Cardiac septum (tissue), 1 donor: ENCODE measurements at regions of chr7 and their contacts with region 1.

Region 1: DNA sequence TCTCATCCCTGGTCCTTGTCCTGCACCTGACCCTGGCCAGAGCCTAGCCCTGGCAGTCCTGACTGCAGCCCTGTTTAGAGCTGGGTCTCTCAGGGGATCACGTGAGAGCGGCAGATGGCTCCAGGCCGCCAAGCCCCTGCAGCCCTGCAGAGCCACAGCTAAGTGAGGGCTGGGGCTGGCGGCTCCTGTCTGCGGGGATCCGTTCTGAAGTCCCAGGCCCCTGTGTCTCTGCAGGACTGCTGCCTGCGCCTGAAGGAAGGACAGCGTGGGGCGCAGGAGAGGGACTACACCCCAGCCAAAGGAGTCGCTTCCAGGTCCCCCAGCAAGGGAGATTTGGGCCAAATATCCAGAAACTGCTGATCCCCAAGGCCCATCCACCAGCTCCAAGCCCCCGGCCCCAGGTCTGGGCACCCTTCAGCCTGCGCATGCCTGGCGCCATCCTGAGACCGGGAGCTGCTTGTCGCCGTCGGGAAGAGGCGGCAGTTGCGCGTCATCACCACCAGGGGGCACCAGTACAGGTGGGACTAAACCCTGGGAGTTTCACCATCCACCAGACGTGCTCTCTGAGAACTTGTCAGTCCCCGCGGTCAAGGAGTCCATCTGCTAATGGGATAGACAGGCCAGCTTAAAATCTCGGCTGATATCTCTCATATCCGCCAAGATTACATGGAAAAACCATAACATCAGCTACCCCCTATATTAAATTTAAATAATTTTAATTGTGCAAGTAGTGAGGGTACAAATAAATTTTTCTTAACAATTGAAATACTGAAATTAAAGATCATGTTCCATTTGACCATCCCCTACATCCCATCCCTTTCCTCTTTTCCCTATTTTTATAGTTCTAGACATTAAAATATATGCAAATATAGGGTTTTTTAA is 25.1 kb upstream of the GHRHR start:
- DNase-seq: peak; percentile 93

Region 2: GRCh38 chr7:30893357-30893756 is 45.3 kb before region 1 on chr7:
- intact Hi-C with region 1: loop called (anchors 5 kb)
- DNase-seq: no peak

Region 3: DNA sequence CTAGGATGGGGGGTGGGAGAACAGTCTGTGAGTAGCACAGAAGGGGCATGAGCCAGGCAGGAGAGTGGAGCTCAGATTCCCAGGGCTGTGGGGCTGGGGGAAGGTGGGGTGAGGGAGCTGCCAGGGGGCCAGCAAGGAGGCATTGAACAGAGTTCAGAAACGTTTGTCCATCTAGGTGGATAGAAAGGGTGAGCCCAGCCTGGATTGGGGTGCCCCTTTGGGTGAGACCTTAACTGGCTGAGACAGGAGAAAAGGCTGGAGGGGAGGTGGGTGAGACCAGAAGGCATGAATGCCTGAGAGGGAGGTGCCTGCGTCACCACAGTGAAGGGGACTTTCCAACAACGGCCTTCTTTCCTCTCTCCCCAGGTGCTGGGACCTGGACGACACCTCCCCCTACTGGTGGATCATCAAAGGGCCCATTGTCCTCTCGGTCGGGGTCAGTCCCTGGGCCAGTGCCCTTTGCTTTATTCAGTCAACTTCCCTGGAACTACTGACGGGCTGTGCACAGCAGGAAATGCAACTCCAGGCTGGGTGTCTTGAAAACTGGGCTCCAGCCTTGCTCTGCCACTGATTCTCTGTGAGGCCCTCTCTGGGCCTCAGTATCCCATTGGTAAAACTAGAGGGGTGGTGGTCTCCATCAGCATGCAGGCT is 36.1 kb after region 1 on chr7:
- intact Hi-C with region 1: loop called (anchors 5 kb)
- DNase-seq: peak; percentile 74